ENCODE measurements at regions of chr1 and their contacts with region 1.

Region 1: GRCh38 chr1:211830330-211831142 is at the start of gene LPGAT1:
- DNase-seq: peak; percentile 69 to 80
- ATAC-seq: peak; percentile 87 to 90 (median 87)
- H3K4me3 ChIP-seq: peak within 1 kb of the TSS; percentile 81
- H3K4me3 Mint-ChIP-seq: peak within 1 kb of the TSS; percentile 98
- H3K27ac ChIP-seq: peak within 1 kb of the TSS; percentile 87
- H3K27ac Mint-ChIP-seq: peak within 1 kb of the TSS; percentile 90 to 91
- H3K4me1 ChIP-seq: peaks cover 37% of the 10 kb centered on the region
- H3K4me1 Mint-ChIP-seq: peaks cover 58% of the 10 kb centered on the region in 2 donors
- H3K27me3 ChIP-seq: no peaks in the 10 kb centered on the region
- H3K27me3 Mint-ChIP-seq: no peaks in the 10 kb centered on the region
- CTCF ChIP-seq: peak; percentile 62
- total RNA-seq, gene LPGAT1: 58.6 to 76.3 (median 71.5) TPM

Region 2: DNA sequence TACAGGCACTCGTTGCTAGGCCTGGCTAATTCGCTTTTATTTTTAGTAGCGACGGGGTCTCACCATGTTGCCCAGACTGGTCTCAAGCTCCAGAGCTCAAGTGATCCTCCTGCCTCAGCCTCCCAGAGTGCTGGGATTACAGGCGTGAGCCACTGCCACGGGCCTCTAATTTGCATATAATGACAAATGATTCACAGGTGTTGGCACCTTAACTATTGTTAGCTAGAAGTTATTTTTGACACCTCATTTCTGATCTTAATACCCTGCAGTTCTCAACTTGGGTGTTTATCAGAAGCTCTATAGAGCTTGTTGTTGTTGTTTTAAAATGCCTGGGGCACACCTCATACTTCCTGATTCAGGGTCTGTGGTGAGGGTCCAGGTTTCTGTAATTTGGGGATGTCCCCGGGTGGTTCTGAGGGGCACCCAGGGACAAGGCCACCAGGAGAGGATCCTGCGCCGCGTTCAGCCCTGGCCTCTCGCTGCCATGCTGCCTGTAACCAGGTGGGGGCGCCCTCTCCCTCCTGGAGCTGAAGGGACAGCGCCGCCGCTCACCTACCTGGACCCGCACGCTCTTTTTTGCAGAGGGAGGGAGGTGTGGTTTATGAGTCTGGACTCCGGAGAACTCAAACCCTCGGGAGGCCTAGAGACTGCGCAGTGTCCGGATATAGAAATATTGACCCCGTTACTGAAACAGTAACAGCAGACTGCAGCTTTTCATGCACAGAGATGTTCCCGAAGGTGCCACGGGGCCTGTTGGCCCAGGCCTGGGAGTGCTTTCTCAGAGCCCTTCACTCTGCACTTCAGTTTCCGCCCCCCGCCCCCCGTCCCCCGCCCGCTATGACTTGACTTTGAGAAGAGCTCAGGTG is 132.1 kb before region 1 on chr1:
- intact Hi-C with region 1: loop called (anchors 5 kb)
- DNase-seq: peak; percentile 85
- ATAC-seq: peak; percentile 89 to 93 (median 92)
- H3K4me3 ChIP-seq: no peak overlapping the region
- H3K4me3 Mint-ChIP-seq: peak overlapping the region; percentile 25
- H3K27ac ChIP-seq: no peak overlapping the region
- H3K27ac Mint-ChIP-seq: peak overlapping the region in 1 of 2 donors; percentile 47
- H3K4me1 ChIP-seq: peaks cover 54% of the 10 kb centered on the region
- H3K4me1 Mint-ChIP-seq: peaks cover 39 to 45% of the 10 kb centered on the region in 2 donors
- H3K27me3 ChIP-seq: no peaks in the 10 kb centered on the region
- H3K27me3 Mint-ChIP-seq: peaks cover 0 to 3% of the 10 kb centered on the region in 2 donors
- CTCF ChIP-seq: peak; percentile 98

Region 3: DNA sequence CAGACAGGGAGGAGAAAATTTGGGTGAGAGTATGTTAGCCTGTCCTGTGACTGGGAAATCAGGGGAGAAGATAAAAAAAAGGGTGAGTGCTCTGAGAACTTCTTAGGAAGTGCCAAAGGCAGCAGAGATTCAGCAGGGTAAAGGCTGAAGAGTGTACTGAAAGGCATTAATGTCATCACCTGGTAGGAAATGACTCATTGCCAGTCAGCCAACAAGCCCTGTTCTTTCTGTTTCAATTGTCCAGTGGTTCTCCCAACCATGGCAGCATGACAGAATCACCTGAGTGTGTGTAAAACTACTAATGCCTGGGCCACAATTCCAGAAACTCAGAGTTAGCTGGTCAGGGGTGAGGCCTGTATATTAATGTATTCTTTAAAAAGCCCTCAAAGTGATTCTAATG is 121.3 kb after region 1 on chr1:
- intact Hi-C with region 1: no loop called
- DNase-seq: no peak
- ATAC-seq: no peak
- H3K4me3 ChIP-seq: no peak overlapping the region
- H3K4me3 Mint-ChIP-seq: no peak overlapping the region
- H3K27ac ChIP-seq: no peak overlapping the region
- H3K27ac Mint-ChIP-seq: no peak overlapping the region
- H3K4me1 ChIP-seq: no peaks in the 10 kb centered on the region
- H3K4me1 Mint-ChIP-seq: no peaks in the 10 kb centered on the region
- H3K27me3 ChIP-seq: no peaks in the 10 kb centered on the region
- H3K27me3 Mint-ChIP-seq: no peaks in the 10 kb centered on the region
- CTCF ChIP-seq: no peak

Measured in natural killer cell (primary cell).